HepG2 (cell line): ENCODE measurements at regions of chr4 and their contacts with region 1.

Region 1: GRCh38 chr4:37452952-37453280 is 208.4 kb downstream of the NWD2 start:
- DNase-seq: peak; percentile 79
- ATAC-seq: peak; percentile 89
- H3K4me3 ChIP-seq: peak overlapping the region in 2 of 3 experiments; percentile 18 to 65; a peak in 1 of 6 replicates
- H3K27ac ChIP-seq: no peak overlapping the region
- H3K4me1 ChIP-seq: peaks cover 34% of the 10 kb centered on the region
- H3K27me3 ChIP-seq: peaks cover 0 to 26% of the 10 kb centered on the region in 2 experiments; a peak in 4 of 5 replicates
- CTCF ChIP-seq: peak; percentile 81
- EP300 ChIP-seq: no peak
- POLR2A ChIP-seq: no peak
- RAD21 ChIP-seq: no peak

Region 2: DNA sequence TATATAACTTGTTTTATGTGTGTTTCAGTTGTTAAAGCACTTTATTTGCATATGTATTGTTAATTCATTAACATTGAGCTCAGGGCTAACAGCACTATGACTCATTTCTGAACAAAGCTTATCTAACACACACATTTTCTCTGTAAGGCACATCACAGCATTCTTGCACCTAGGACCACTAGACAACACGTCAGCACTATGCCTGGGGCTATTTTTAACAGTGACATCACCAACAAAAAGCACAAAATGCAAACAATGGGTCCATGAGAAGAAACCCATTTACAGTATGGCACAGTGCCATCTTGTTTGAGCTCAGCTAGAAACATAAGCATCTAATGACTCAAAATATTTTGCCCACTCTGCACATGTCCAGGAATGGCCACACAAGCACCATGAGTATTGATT is 108.9 kb after region 1 on chr4:
- CTCF ChIA-PET with region 1: interaction called, 7 read pairs
- POLR2A ChIA-PET with region 1: no interaction called
- in situ Hi-C with region 1: loop called (anchors 5 kb)
- intact Hi-C with region 1: loop called (anchors 1 kb)
- DNase-seq: peak; percentile 25
- ATAC-seq: no peak
- H3K4me3 ChIP-seq: no peak overlapping the region
- H3K27ac ChIP-seq: no peak overlapping the region
- H3K4me1 ChIP-seq: no peaks in the 10 kb centered on the region
- H3K27me3 ChIP-seq: no peaks in the 10 kb centered on the region
- CTCF ChIP-seq: no peak
- EP300 ChIP-seq: no peak
- POLR2A ChIP-seq: no peak
- RAD21 ChIP-seq: no peak

Region 3: GRCh38 chr4:37568481-37568880 is 115.6 kb after region 1 on chr4:
- CTCF ChIA-PET with region 1: interaction called, 7 read pairs
- POLR2A ChIA-PET with region 1: no interaction called
- in situ Hi-C with region 1: loop called (anchors 5 kb)
- intact Hi-C with region 1: loop called (anchors 1 kb)
- DNase-seq: no peak
- ATAC-seq: no peak
- H3K4me3 ChIP-seq: no peak overlapping the region
- H3K27ac ChIP-seq: no peak overlapping the region
- H3K4me1 ChIP-seq: peaks cover 17% of the 10 kb centered on the region
- H3K27me3 ChIP-seq: no peaks in the 10 kb centered on the region
- CTCF ChIP-seq: no peak
- EP300 ChIP-seq: no peak
- POLR2A ChIP-seq: no peak
- RAD21 ChIP-seq: no peak

Region 4: DNA sequence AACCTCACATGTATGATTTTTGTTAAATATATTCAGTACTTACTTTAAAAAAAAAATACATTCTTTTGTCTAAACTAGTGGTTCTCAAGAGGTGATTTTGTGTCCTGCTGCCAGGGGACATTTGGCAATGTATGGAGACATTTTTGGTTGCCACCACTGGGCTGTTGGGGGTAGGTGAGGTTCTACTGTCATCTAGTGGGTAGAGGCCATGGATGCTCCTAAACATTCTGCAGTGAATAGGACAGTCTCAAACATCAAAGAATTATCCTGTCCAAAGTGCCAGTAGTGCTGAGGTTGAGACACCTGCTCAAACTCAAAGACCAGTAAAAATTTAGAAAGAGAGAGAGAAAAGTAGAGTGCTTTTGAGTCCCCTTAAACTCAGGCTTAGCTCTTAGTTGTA is 340.6 kb after region 1 on chr4:
- CTCF ChIA-PET with region 1: no interaction called
- POLR2A ChIA-PET with region 1: no interaction called
- in situ Hi-C with region 1: loop called (anchors 10 kb)
- intact Hi-C with region 1: loop called (anchors 1 kb)
- DNase-seq: peak; percentile 27
- ATAC-seq: peak; percentile 90
- H3K4me3 ChIP-seq: no peak overlapping the region
- H3K27ac ChIP-seq: no peak overlapping the region
- H3K4me1 ChIP-seq: peaks cover 10% of the 10 kb centered on the region; the same call in 1 of the 2 replicates
- H3K27me3 ChIP-seq: no peaks in the 10 kb centered on the region
- CTCF ChIP-seq: peak; percentile 71
- EP300 ChIP-seq: no peak
- POLR2A ChIP-seq: no peak
- RAD21 ChIP-seq: peak; percentile 60